ENCODE measurements at regions of chr13 and their contacts with region 1.

Region 1: GRCh38 chr13:110108347-110109174 is 198.4 kb downstream of the COL4A1 start:
- DNase-seq: peak; percentile 86 to 91
- ATAC-seq: peak; percentile 92
- H3K4me3 ChIP-seq: no peak overlapping the region
- H3K27ac ChIP-seq: peak overlapping the region in 1 of 2 donors; percentile 2
- H3K4me1 ChIP-seq: peaks cover 2 to 3% of the 10 kb centered on the region in 2 donors
- H3K27me3 ChIP-seq: no peaks in the 10 kb centered on the region

Region 2: DNA sequence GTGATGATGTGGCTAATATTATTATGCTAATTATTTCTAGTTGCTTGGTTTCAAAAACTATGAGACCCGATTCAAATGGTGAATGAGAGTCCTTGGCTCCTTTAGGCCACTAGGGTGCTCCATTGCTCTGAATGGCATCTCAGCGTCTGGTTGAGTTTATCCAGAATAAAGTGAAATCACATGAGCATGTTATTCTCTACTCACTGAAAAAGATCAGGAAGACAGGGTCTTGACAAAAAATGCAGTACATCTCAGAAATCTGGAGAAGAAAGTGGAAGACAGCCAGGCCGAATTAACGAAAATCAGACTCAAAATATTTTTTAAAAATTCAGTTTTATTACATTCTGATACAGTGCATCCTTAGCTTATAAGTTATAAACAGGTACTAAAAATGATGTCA is 962.9 kb before region 1 on chr13:
- intact Hi-C with region 1: loop called (anchors 5 kb)
- DNase-seq: no peak
- ATAC-seq: peak; percentile 80
- H3K4me3 ChIP-seq: no peak overlapping the region
- H3K27ac ChIP-seq: no peak overlapping the region
- H3K4me1 ChIP-seq: no peaks in the 10 kb centered on the region
- H3K27me3 ChIP-seq: no peaks in the 10 kb centered on the region

Region 3: DNA sequence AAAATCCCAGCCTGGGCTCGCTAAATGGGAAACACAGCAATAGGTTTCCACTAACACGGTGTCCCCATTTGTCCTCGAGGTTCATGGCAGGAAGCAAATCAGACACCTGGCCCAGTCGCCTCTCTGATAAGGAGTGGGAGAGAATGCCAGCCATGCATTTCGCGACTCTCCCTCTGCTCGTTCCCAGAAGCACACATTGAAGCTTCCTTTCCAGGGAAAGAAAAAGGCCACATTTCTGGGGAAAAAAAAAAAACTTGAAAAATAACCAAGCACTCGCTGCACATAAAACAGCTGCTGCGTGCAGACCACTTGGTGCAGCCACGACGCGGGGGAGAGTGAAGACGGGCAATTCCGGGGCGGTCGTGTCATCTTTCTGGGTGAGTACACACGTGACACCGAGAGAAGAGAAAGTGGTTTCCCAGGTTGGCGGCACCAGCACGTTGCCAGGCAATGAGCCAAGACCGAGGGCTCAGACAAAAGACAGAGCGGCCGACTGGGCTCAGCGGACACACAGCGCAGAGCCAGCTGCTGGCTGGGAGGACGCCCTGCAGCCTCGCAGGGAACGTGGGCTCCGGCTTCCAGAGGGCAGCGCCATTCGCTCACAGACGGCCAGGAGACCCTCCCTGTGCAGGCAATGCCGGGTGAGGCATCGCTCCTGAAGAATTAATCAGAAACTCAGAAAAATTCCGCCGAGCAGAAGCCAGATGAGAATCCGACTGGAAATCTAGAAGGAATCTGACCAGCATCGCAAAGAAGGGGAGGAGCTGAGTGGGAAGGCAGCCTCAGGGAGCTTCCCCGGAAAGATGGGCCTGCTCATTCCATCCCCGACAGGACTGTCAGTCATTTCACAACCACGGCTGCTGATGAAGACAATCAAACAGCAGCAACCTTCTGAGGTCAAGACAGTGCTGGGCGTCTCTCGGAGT is 239.0 kb before region 1 on chr13:
- intact Hi-C with region 1: loop called in 1 of 2 experiments (anchors 5 kb)
- DNase-seq: peak; percentile 88 to 89
- ATAC-seq: peak; percentile 86
- H3K4me3 ChIP-seq: peak overlapping the region; percentile 19 to 28
- H3K27ac ChIP-seq: peak overlapping the region in 1 of 2 donors; percentile 73
- H3K4me1 ChIP-seq: peaks cover 0 to 3% of the 10 kb centered on the region in 2 donors
- H3K27me3 ChIP-seq: no peaks in the 10 kb centered on the region

Region 4: GRCh38 chr13:110055089-110055488 is 53.5 kb before region 1 on chr13:
- intact Hi-C with region 1: loop called (anchors 5 kb)
- DNase-seq: no peak
- ATAC-seq: no peak
- H3K4me3 ChIP-seq: no peak overlapping the region
- H3K27ac ChIP-seq: no peak overlapping the region
- H3K4me1 ChIP-seq: no peaks in the 10 kb centered on the region
- H3K27me3 ChIP-seq: no peaks in the 10 kb centered on the region

Measured in aorta (tissue), 5 donors.